Lower leg skin (tissue), 4 donors: ENCODE measurements at regions of chr4 and their contacts with region 1.

Region 1: GRCh38 chr4:180840142-180840541 is 1403.1 kb upstream of the TENM3 start:
- DNase-seq: no peak
- H3K4me3 ChIP-seq: no peak overlapping the region
- CTCF ChIP-seq: no peak
- POLR2A ChIP-seq: no peak

Region 2: GRCh38 chr4:179631321-179631720 is 1208.8 kb before region 1 on chr4:
- intact Hi-C with region 1: no loop called
- DNase-seq: no peak
- H3K4me3 ChIP-seq: no peak overlapping the region
- CTCF ChIP-seq: no peak
- POLR2A ChIP-seq: no peak

Region 3: GRCh38 chr4:180860089-180860720 is 20.1 kb after region 1 on chr4:
- intact Hi-C with region 1: loop called (anchors 1 kb)
- DNase-seq: no peak
- H3K4me3 ChIP-seq: no peak overlapping the region
- CTCF ChIP-seq: no peak
- POLR2A ChIP-seq: no peak

Region 4: DNA sequence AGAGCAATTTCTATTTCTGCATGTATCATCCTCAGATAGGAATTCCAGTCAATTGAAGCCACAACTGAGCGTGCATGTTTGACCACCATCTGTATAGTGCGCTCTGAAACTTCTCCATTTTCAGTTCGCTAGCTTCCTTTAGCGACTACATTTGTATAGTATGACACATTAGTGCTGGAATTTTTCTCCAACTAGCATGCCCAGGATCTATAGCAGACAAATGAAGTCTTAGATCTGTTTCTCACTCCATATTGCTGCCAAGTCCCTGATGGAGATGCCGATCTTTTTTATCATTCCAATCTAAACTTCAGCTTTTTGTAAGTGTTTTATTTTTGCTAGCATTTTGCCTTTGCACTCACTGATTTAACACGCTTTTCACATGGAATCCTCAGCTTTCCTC is 628.3 kb after region 1 on chr4:
- intact Hi-C with region 1: no loop called
- DNase-seq: no peak
- H3K4me3 ChIP-seq: no peak overlapping the region
- CTCF ChIP-seq: no peak
- POLR2A ChIP-seq: no peak